ENCODE measurements at regions of chr10 and their contacts with region 1.

Region 1: GRCh38 chr10:2079603-2080078 is 342.3 kb upstream of the ADARB2 start:
- DNase-seq: no peak
- ATAC-seq: no peak
- H3K4me3 ChIP-seq: no peak overlapping the region
- H3K27ac ChIP-seq: no peak overlapping the region
- H3K4me1 ChIP-seq: no peaks in the 10 kb centered on the region
- H3K27me3 ChIP-seq: no peaks in the 10 kb centered on the region

Region 2: DNA sequence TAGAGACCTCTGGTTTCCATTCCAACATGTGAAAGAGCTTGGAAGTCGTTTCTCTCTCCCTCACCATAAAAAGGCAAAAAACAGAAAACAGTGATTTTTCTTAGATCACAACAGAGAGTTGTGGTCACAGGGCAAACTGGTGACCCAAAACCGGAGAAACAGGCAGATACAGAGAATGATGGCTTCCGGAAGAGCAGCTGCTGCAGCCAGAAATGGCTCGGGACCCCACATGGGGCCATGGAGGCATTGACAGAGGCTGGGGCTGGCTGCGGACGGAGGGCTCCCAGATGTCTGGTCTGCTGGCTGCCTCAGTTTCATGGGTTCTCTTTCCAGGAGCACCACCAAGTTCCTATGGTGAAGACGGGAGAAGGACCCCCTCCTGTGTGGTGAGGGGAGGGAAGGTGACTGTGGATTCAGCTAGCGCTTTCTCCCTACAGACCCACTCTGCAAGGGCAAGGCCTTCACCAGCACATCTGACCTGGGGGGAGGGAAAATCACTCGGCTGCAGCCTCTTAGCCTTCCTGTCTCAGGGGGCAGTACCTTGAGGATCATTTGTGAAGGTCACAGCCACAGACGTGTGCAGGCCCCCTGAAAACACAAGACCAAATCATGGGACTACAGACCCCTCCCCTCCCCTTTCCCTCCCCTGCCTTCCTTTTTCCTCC is 942.0 kb before region 1 on chr10:
- intact Hi-C with region 1: loop called in 1 of 4 experiments (anchors 5 kb)
- DNase-seq: no peak
- ATAC-seq: no peak
- H3K4me3 ChIP-seq: no peak overlapping the region
- H3K27ac ChIP-seq: no peak overlapping the region
- H3K4me1 ChIP-seq: no peaks in the 10 kb centered on the region
- H3K27me3 ChIP-seq: no peaks in the 10 kb centered on the region

Region 3: GRCh38 chr10:2173327-2173726 is 93.7 kb after region 1 on chr10:
- intact Hi-C with region 1: no loop called
- DNase-seq: no peak
- ATAC-seq: no peak
- H3K4me3 ChIP-seq: no peak overlapping the region
- H3K27ac ChIP-seq: no peak overlapping the region
- H3K4me1 ChIP-seq: no peaks in the 10 kb centered on the region
- H3K27me3 ChIP-seq: no peaks in the 10 kb centered on the region

Region 4: GRCh38 chr10:2551101-2551500 is 471.5 kb after region 1 on chr10:
- intact Hi-C with region 1: no loop called
- DNase-seq: no peak
- ATAC-seq: no peak
- H3K4me3 ChIP-seq: no peak overlapping the region
- H3K27ac ChIP-seq: no peak overlapping the region
- H3K4me1 ChIP-seq: no peaks in the 10 kb centered on the region
- H3K27me3 ChIP-seq: no peaks in the 10 kb centered on the region